PC-9 (cell line): ENCODE measurements at regions of chr4 and their contacts with region 1.

Region 1: GRCh38 chr4:8594097-8595038 is 1.8 kb downstream of the CPZ start:
- DNase-seq: peak; percentile 54 to 64
- H3K4me3 ChIP-seq: no peak overlapping the region
- H3K27ac ChIP-seq: no peak overlapping the region
- H3K4me1 ChIP-seq: peaks cover 6% of the 10 kb centered on the region; the same call in 1 of the 2 replicates
- H3K27me3 ChIP-seq: no peaks in the 10 kb centered on the region
- CTCF ChIP-seq: peak; percentile 81

Region 2: GRCh38 chr4:8241895-8242696 is 352.3 kb before region 1 on chr4:
- CTCF ChIA-PET with region 1: no interaction called
- POLR2A ChIA-PET with region 1: no interaction called
- intact Hi-C with region 1: loop called (anchors 10 kb)
- DNase-seq: peak in 1 of 2 experiments; percentile 85
- H3K4me3 ChIP-seq: no peak overlapping the region
- H3K27ac ChIP-seq: no peak overlapping the region
- H3K4me1 ChIP-seq: peaks cover 5% of the 10 kb centered on the region; the same call in 1 of the 2 replicates
- H3K27me3 ChIP-seq: no peaks in the 10 kb centered on the region
- CTCF ChIP-seq: peak; percentile 84

Region 3: DNA sequence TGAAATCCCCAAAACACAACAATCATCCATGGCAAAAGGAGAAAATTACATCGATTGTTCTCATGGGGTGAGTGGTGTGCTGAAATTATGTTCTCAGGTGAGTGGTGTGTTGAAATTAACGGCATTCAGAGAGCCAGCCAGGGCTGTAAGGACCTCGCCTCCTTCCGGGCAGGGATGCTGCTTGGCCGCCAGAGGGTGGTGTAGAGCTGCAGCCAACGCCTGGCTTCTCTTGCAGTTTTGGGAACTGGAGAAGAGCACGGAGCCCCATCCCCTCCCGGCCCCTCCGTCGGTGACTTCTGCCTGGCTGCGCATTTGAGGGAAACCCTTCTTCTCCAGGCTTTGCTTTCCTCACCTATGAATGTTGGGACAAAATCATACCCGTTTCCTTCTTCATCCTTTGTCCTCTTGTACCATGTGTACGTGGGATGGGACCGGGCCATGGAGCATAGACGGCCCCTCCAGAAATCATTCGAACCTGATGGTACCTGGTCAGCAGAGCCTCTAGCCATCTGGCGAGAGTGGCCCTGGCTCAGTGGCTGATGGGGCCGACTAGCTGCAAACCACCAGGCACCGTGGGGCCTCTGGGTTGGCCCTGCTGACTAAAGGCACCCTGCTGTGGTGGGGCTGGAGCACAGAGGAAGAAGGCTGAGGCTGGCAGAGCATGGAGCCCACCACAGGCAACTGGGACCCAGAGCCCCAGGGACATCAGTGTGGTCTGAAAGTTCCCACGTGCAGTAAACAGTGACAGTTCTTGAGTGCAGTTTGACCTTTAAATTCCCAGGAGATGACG is 125.4 kb before region 1 on chr4:
- CTCF ChIA-PET with region 1: interaction called, 3 read pairs
- POLR2A ChIA-PET with region 1: no interaction called
- intact Hi-C with region 1: loop called (anchors 1 kb)
- DNase-seq: peak; percentile 46 to 72
- H3K4me3 ChIP-seq: no peak overlapping the region
- H3K27ac ChIP-seq: no peak overlapping the region
- H3K4me1 ChIP-seq: peaks cover 15% of the 10 kb centered on the region; the same call in 1 of the 2 replicates
- H3K27me3 ChIP-seq: no peaks in the 10 kb centered on the region
- CTCF ChIP-seq: peak; percentile 89

Region 4: GRCh38 chr4:8537041-8537552 is 57.3 kb before region 1 on chr4:
- CTCF ChIA-PET with region 1: no interaction called
- POLR2A ChIA-PET with region 1: no interaction called
- intact Hi-C with region 1: loop called (anchors 2 kb)
- DNase-seq: peak; percentile 80 to 86
- H3K4me3 ChIP-seq: no peak overlapping the region
- H3K27ac ChIP-seq: peak overlapping the region; percentile 86
- H3K4me1 ChIP-seq: peaks cover 85% of the 10 kb centered on the region
- H3K27me3 ChIP-seq: no peaks in the 10 kb centered on the region
- CTCF ChIP-seq: no peak

Region 5: GRCh38 chr4:8547108-8547970 is 47.0 kb before region 1 on chr4:
- CTCF ChIA-PET with region 1: interaction called, 8 read pairs
- POLR2A ChIA-PET with region 1: no interaction called
- intact Hi-C with region 1: loop called (anchors 1 kb)
- DNase-seq: peak; percentile 66 to 89
- H3K4me3 ChIP-seq: peak overlapping the region; percentile 28; the same call in 1 of the 2 replicates
- H3K27ac ChIP-seq: peak overlapping the region; percentile 98
- H3K4me1 ChIP-seq: peaks cover 46% of the 10 kb centered on the region
- H3K27me3 ChIP-seq: no peaks in the 10 kb centered on the region
- CTCF ChIP-seq: peak; percentile 47

Region 6: DNA sequence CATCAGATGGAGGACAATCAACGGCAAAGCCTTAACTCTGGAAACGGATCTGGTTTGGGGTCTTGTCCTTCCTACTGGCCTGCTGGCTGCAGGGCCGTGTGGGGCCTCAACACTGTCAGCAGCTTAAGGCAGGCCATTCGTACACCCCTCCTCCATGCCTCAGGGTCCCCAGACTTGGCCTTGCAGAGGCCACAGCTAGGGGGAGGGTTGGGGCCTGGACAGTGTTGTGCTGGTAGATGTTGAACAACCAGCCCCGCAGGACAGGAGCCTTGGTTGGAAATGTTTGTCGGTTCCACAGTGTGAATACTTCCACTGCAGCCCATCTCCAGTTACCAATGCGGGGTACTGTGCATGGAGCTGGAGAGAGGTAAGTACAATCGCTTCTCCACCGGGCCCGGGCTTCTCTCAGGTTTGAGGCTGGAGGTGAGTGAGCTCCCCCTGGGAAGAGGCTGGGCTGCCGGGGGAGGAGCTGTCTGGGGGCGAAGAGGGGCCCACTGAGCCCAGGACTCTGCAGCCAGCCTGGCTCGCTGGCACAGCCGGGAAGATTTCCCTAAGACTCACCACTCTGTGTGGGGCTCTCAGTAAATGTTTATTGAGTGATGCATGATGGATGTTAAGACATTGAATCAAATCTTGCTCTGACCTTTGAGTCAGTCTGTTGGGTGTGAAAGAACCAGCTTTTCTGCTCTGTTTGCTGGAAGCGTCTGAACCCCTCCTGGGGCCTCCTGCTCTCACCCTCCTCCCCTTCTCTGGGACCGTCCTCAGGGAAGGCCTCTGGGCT is 33.9 kb before region 1 on chr4:
- CTCF ChIA-PET with region 1: interaction called, 3 read pairs
- POLR2A ChIA-PET with region 1: interaction called, 13 read pairs
- intact Hi-C with region 1: no loop called
- DNase-seq: peak; percentile 55 to 94
- H3K4me3 ChIP-seq: peak overlapping the region; percentile 69
- H3K27ac ChIP-seq: peak overlapping the region; percentile 95
- H3K4me1 ChIP-seq: peaks cover 74% of the 10 kb centered on the region
- H3K27me3 ChIP-seq: no peaks in the 10 kb centered on the region
- CTCF ChIP-seq: no peak